ENCODE measurements at regions of chr22 and their contacts with region 1.

Region 1: DNA sequence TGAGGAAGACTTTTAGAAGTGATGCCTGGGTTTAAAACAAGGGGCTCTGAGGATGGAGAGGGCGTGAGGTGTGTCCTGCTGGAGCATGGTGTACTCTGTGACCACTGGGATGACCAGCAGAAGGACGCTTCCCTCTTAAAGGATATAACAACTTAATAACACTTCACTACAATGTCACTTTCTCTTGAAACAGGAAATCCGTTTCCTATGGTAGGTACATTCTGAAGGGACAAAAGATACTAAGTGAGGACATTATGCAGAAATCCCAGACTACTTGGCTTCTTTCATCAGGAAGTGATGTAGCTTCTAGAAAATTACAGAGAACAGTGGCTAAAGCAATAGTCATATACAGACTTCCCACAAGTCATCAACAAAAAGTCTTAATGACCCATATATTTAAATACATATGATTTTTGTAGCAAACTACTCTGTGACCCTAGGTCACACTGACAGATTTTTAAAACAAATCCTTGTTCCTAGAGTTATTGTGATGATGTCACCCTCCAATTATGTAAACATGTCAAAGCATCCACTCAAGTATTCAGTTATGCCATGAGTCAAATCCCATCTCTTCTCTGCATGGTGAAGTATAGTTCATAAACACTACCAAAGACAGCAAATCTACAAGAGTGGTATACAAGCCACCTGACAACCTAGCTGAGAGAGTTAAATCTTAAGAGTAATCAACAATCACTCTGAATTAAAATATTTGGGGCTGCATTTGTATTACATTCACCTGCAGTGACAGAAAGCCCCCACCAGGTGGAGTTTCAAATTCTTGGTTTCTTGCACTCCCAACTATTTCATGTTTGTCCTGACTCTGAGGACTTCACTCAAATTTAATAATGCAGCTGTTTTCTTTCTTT is 32.8 kb downstream of the PITPNB start:
- DNase-seq: peak in 5 of 7 donors; percentile 44 to 80 (median 61)
- H3K4me3 ChIP-seq: no peak overlapping the region
- H3K27ac ChIP-seq: peak overlapping the region in 2 of 5 donors; percentile 15 to 69
- H3K4me1 ChIP-seq: peaks cover 11 to 24% of the 10 kb centered on the region in 2 donors
- H3K27me3 ChIP-seq: no peaks in the 10 kb centered on the region
- CTCF ChIP-seq: peak; percentile 80 to 93 (median 86)
- POLR2A ChIP-seq: no peak

Region 2: DNA sequence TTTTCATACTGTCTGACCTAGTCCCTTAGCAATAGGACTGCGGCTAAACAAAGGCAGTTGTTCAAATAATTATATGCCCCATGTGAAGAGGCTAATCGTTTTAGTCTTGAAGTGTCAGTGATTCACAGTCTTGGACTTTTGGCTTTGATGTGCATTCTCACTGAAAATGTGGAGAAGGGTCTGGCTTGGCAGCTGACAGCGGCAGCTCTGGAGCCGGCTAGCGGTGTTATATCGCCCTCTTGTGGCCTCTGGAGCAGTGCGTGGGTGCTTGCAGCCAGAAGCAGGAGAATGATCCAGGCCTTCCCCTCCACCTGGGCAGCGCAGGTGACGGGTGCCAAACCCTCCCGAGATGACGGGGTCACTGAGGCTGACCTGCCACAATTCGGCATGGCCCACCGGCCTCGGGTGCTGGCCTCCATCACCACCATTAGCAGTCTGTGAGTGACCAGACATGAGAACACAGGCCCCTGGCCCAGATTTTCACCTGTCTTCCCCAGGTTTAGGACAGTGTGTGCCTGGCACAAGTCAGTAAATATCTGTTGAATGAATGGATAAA is 123.1 kb after region 1 on chr22:
- intact Hi-C with region 1: loop called (anchors 2 to 5 kb)
- DNase-seq: peak; percentile 58 to 89 (median 72)
- H3K4me3 ChIP-seq: no peak overlapping the region
- H3K27ac ChIP-seq: peak overlapping the region in 1 of 5 donors; percentile 14
- H3K4me1 ChIP-seq: peaks cover 0 to 6% of the 10 kb centered on the region in 2 donors
- H3K27me3 ChIP-seq: no peaks in the 10 kb centered on the region
- CTCF ChIP-seq: peak; percentile 89 to 98 (median 94)
- POLR2A ChIP-seq: no peak

Region 3: GRCh38 chr22:28014211-28015045 is 128.2 kb after region 1 on chr22:
- intact Hi-C with region 1: loop called (anchors 2 to 5 kb)
- DNase-seq: no peak
- H3K4me3 ChIP-seq: no peak overlapping the region
- H3K27ac ChIP-seq: no peak overlapping the region
- H3K4me1 ChIP-seq: peaks cover 0 to 12% of the 10 kb centered on the region in 2 donors
- H3K27me3 ChIP-seq: no peaks in the 10 kb centered on the region
- CTCF ChIP-seq: no peak
- POLR2A ChIP-seq: no peak

Region 4: DNA sequence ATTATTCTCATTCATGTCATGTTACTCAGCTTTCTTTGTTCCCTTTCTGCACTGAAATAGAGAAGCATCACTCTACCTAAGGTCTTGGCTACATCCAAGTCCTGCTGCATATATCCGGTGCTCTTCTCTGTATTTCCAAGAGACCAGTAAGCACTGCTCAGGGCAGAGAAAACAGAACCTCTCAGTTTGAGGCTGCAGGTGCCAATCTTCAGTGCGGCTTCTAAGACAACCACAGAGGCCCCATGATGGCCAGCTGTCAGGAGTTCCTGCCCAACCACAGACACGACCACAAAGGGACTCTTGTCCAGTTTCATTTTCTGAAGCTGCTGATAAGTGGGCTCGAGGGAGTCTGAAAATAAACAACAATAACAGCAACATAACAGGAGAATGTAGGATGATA is 411.3 kb after region 1 on chr22:
- intact Hi-C with region 1: no loop called
- DNase-seq: peak in 1 of 7 donors; percentile 1
- H3K4me3 ChIP-seq: no peak overlapping the region
- H3K27ac ChIP-seq: no peak overlapping the region
- H3K4me1 ChIP-seq: peaks cover 0 to 10% of the 10 kb centered on the region in 2 donors
- H3K27me3 ChIP-seq: no peaks in the 10 kb centered on the region
- CTCF ChIP-seq: no peak
- POLR2A ChIP-seq: no peak